ENCODE measurements at regions of chr10 and their contacts with region 1.

Region 1: DNA sequence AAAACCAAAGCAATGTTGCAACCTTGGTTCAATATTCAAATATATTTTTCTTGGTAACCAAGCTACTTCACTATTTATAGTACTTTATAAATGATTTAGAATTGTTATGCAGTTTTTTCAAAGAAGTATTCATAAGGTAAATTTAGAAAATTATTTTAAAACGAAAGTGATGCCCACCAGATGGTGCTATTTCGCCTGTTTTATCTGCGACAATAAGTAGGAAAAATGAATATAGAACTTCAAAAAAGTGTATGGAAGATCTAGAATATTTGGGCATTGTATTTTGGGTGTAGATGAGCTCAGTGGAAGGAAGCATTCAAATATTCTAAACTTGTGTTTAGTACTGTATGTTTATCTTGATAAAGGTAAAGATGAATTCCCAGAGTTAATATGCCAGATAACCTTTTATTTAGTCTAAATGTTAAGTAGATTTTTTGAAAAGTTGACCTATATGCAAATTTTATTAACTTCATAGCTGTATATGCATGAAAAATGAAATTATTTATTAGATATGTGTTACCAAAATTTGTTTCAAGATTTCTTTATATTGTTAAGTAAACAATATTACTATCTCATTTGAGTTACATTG is 93.2 kb downstream of the ADK start:
- DNase-seq: no peak
- ATAC-seq: no peak

Region 2: DNA sequence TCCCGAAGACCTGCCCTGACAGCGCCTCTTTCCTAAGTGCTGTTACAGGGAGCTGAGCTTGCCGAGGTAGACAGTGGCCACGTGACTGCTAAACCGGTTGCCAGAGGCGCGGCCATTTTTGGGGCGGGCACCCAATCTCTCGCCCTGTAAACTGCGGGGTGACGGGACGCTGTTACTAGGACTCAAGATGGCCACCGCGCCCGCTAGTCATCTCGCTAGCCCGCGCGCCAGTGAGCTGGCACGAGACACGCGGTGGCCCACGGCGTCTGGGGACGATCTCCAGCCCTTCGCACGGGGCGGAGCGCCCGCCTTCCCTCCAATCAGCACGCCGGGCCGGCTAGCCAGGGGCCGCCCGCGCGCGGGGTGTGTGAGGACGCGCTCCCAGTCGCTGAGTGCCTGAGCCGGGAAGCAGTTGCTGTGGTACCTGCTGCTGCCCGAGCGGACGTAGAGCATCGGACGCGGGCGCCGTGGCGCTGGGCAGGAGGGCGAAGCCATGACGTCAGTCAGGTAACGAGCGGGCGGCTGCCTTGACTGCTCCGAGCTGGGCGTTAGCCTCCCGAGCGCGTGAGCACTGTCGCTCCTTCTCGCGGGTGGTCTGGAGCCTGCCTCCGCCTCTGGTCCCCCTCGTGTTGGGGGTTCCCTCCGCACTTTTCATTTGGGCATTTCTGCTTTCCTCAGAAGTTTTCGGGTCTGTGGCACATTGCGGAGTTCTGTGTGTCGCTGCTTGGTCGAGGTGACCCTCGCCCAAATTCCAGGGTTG is 67.6 kb before region 1 on chr10:
- intact Hi-C with region 1: no loop called
- DNase-seq: peak; percentile 93
- ATAC-seq: peak; percentile 97

Region 3: DNA sequence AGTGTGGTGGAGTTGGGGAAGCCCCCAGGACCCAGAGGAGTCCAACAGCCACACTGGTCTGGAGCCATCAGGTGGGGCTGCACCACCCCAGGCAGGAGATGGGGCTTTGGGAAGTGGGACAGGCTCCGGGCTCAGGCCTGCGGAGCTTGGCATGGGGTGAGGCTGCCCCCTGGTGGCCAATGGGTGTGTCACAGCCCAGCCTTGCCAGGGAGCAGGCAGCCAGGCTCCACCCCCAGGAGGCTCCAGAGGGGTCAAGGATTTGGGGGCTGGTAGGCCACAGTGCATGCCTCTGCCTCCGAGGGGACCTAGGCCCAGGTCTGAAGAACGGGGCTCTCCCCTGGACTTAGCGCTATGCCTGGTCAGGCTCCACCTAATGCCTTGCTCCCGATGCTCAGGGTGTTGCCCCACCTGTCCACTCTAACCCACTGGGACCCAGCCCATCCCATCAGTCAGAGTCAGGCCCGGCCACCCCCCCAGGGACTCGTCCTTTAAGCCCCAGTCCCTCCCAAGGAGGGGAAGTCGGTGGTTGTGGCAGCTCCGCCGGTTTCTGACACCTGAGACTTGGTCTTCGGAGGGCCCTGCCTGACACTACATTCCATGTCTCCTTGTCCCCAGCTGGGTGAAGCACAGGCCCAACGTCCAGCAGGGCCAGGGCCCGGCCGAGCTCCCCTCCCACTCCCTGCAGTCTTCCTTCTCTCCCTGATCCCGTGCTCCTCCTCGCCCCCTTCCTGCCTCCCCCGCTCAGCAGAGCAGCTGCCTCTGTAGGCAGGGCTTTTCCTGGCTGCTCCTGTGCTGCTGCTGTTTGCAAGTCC is 856.0 kb after region 1 on chr10:
- intact Hi-C with region 1: loop called (anchors 10 kb)
- DNase-seq: peak; percentile 91
- ATAC-seq: peak; percentile 93

Measured in sciatic nerve (tissue), 2 donors.